Activated CD8-positive, alpha-beta T cell treated with anti-CD3 and anti-CD28 coated beads, Interleukin-2, amount 10 ng/mL, durations not matched to agents 7 days and 5 days (primary cell): ENCODE measurements at regions of chr22 and their contacts with region 1.

Region 1: GRCh38 chr22:31970490-31971444 is 26.4 kb downstream of the YWHAH start:
- DNase-seq: peak; percentile 86
- ATAC-seq: peak; percentile 95
- H3K4me3 Mint-ChIP-seq: peak overlapping the region; percentile 75
- H3K27ac Mint-ChIP-seq: peak overlapping the region; percentile 8
- H3K4me1 Mint-ChIP-seq: peaks cover 15% of the 10 kb centered on the region
- H3K27me3 Mint-ChIP-seq: no peaks in the 10 kb centered on the region

Region 2: GRCh38 chr22:31943976-31944699 is 26.6 kb before region 1 on chr22 and contains the start of gene YWHAH:
- CTCF ChIA-PET with region 1: interaction called, 16 read pairs
- POLR2A ChIA-PET with region 1: no interaction called
- DNase-seq: peak; percentile 96
- ATAC-seq: peak; percentile 79
- H3K4me3 Mint-ChIP-seq: peak within 1 kb of the TSS; percentile 93
- H3K27ac Mint-ChIP-seq: peak within 1 kb of the TSS; percentile 97
- H3K4me1 Mint-ChIP-seq: peaks cover 35% of the 10 kb centered on the region
- H3K27me3 Mint-ChIP-seq: no peaks in the 10 kb centered on the region
- total RNA-seq, gene YWHAH: 248 to 251 TPM

Region 3: GRCh38 chr22:31952459-31952858 is 18.3 kb before region 1 on chr22:
- CTCF ChIA-PET with region 1: interaction called, 68 read pairs
- POLR2A ChIA-PET with region 1: no interaction called
- DNase-seq: no peak
- ATAC-seq: no peak
- H3K4me3 Mint-ChIP-seq: no peak overlapping the region
- H3K27ac Mint-ChIP-seq: no peak overlapping the region
- H3K4me1 Mint-ChIP-seq: peaks cover 76% of the 10 kb centered on the region
- H3K27me3 Mint-ChIP-seq: no peaks in the 10 kb centered on the region

Region 4: GRCh38 chr22:32080904-32081303 is 110.1 kb after region 1 on chr22:
- CTCF ChIA-PET with region 1: interaction called, 12 read pairs
- POLR2A ChIA-PET with region 1: no interaction called
- DNase-seq: peak; percentile 38
- ATAC-seq: peak; percentile 55
- H3K4me3 Mint-ChIP-seq: no peak overlapping the region
- H3K27ac Mint-ChIP-seq: no peak overlapping the region
- H3K4me1 Mint-ChIP-seq: peaks cover 4% of the 10 kb centered on the region
- H3K27me3 Mint-ChIP-seq: peaks cover 18% of the 10 kb centered on the region